Activated CD4-positive, alpha-beta T cell treated with anti-CD3 and anti-CD28 coated beads, Interleukin-2, amount 10 ng/mL, durations not matched to agents 24 days and 14 days (primary cell): ENCODE measurements at regions of chr2 and their contacts with region 1.

Region 1: DNA sequence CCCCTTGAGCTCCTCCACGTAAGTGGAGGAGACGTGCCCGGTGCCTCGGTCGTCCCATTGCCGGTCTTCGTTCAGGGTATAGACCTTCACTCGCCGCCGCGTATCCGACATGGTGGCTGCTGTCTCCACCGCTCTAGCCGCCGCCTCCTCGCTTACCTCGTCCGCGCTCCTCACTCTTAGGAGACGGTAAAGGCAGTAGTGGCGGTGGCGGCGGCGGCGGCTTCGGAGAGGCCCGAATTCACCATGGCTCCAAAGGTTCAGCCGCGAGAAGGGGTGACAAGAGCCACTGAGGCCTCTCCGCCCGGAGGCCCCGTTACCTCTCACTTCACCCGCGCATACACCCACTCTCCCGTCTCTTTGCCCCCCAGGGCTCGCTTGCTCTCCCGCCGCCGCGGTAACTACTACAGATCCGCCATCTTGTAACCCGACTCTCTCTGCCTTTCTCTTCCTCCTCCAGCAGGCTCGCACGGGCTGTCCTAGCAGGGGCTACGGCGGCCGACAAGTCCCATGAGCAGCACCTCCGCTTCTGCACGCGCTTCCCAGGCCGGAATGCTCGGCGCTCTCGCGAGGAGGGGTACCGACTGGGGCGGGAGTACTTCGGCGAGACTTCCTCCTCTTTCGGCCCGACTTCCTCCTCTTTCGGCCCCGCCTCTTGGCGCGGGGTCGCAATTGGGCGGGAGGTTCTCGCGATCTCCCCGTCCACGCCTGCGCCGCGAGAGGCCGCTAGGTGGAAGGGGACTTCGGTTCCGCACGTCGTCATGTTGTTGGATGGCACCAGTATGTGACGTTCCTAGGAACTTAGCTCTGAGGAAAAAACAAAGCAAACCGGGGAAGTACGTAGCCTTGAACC is at the start of gene PPP4R3B:
- DNase-seq: peak; percentile 100
- H3K4me3 Mint-ChIP-seq: no peak within 1 kb of the TSS
- H3K27ac Mint-ChIP-seq: no peak within 1 kb of the TSS
- H3K4me1 Mint-ChIP-seq: peaks cover 35% of the 10 kb centered on the region
- H3K27me3 Mint-ChIP-seq: no peaks in the 10 kb centered on the region
- total RNA-seq, gene PPP4R3B: 78.1 and 82.7 TPM in 2 replicates

Region 2: GRCh38 chr2:53786705-53787612 is 1830.4 kb before region 1 on chr2 and contains the starts of genes ASB3 and ERLEC1:
- intact Hi-C with region 1: loop called (anchors 2 kb)
- DNase-seq: peak; percentile 97
- H3K4me3 Mint-ChIP-seq: peak within 1 kb of the TSS; percentile 97
- H3K27ac Mint-ChIP-seq: peak within 1 kb of the TSS; percentile 96
- H3K4me1 Mint-ChIP-seq: peaks cover 30% of the 10 kb centered on the region
- H3K27me3 Mint-ChIP-seq: no peaks in the 10 kb centered on the region
- total RNA-seq, gene ASB3: 19.6 and 24.0 TPM in 2 replicates
- total RNA-seq, gene ERLEC1: 24.1 and 24.9 TPM in 2 replicates

Region 3: GRCh38 chr2:54723131-54723995 is 894.0 kb before region 1 on chr2 and contains the start of gene EML6:
- intact Hi-C with region 1: loop called (anchors 1 kb)
- DNase-seq: peak; percentile 100
- H3K4me3 Mint-ChIP-seq: peak within 1 kb of the TSS; percentile 96
- H3K27ac Mint-ChIP-seq: peak within 1 kb of the TSS; percentile 82
- H3K4me1 Mint-ChIP-seq: peaks cover 13% of the 10 kb centered on the region
- H3K27me3 Mint-ChIP-seq: peaks cover 73% of the 10 kb centered on the region
- total RNA-seq, gene EML6: 0.77 and 0.83 TPM in 2 replicates

Region 4: GRCh38 chr2:55268907-55269644 is 348.3 kb before region 1 on chr2 and contains the start of gene MTIF2:
- intact Hi-C with region 1: loop called (anchors 5 kb)
- DNase-seq: peak; percentile 97
- H3K4me3 Mint-ChIP-seq: peak within 1 kb of the TSS; percentile 96
- H3K27ac Mint-ChIP-seq: peak within 1 kb of the TSS; percentile 95
- H3K4me1 Mint-ChIP-seq: peaks cover 7% of the 10 kb centered on the region
- H3K27me3 Mint-ChIP-seq: peaks cover 4% of the 10 kb centered on the region
- total RNA-seq, gene MTIF2: 45.7 and 47.1 TPM in 2 replicates

Region 5: GRCh38 chr2:55519938-55520885 is 97.2 kb before region 1 on chr2:
- intact Hi-C with region 1: loop called (anchors 1 kb)
- DNase-seq: no peak
- H3K4me3 Mint-ChIP-seq: peak overlapping the region; percentile 98
- H3K27ac Mint-ChIP-seq: peak overlapping the region; percentile 95
- H3K4me1 Mint-ChIP-seq: peaks cover 12% of the 10 kb centered on the region
- H3K27me3 Mint-ChIP-seq: no peaks in the 10 kb centered on the region

Region 6: DNA sequence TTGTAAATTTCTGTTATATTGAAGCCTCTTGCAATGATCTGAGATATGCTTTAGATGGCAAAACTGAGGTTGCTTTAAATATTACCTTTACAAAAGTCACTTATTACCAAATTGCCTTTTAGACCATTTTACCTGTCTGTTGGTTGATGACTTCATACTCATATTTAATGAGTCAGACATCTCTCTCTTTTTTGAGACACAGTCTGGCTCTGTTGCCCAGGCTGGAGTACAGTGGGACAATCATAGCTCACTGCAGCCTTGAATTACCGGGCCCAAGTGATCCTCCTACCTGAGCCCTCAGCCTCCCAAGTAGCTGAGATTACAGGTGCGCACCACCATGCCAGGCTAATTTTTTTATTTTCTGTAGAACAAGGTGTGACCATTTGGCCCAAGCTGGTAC is 11.5 kb after region 1 on chr2:
- intact Hi-C with region 1: loop called (anchors 1 kb)
- DNase-seq: no peak
- H3K4me3 Mint-ChIP-seq: no peak overlapping the region
- H3K27ac Mint-ChIP-seq: no peak overlapping the region
- H3K4me1 Mint-ChIP-seq: peaks cover 2% of the 10 kb centered on the region
- H3K27me3 Mint-ChIP-seq: no peaks in the 10 kb centered on the region

Region 7: DNA sequence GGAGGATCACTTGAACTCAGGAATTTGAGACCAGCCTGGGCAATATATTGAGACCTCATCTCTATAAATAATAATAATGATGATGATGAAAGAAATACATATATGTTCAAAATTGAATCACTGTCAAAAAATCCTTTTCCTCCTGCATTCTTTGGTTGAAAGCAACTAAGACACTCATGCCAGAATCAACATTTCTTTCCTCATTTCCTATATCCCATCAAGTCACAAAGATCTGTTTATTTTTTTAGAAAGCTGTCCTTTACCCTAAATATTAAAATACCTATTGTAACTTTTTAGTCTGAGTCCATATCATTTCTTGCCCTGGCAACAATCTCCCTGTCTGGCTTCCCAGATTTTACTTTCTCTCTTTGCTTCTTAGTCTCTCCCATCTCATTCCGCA is 31.8 kb after region 1 on chr2:
- intact Hi-C with region 1: no loop called
- DNase-seq: no peak
- H3K4me3 Mint-ChIP-seq: no peak overlapping the region
- H3K27ac Mint-ChIP-seq: no peak overlapping the region
- H3K4me1 Mint-ChIP-seq: no peaks in the 10 kb centered on the region
- H3K27me3 Mint-ChIP-seq: no peaks in the 10 kb centered on the region

Region 8: DNA sequence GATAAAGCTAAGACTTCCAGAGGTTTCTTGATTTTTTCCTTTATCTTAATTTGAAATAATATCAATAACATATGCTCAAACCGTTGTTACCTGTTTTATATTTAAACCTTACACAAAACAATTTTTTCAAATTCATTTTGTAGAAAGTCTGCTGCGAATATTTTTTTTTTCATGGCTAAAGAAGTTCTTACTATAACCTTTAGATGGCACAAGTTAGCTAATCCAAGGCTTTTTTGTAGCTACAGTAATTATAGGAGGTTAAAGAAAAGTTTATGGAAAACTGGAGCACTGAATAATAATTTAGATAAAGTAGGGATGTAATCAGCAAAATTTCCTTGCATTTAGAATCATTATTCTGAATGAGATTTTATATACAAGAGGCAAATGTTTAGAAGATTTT is 154.2 kb after region 1 on chr2:
- intact Hi-C with region 1: no loop called
- DNase-seq: no peak
- H3K4me3 Mint-ChIP-seq: no peak overlapping the region
- H3K27ac Mint-ChIP-seq: no peak overlapping the region
- H3K4me1 Mint-ChIP-seq: no peaks in the 10 kb centered on the region
- H3K27me3 Mint-ChIP-seq: no peaks in the 10 kb centered on the region